Caco-2 (cell line): ENCODE measurements at regions of chr6 and their contacts with region 1.

Region 1: GRCh38 chr6:37137201-37138090 is 32.5 kb upstream of the PIM1 start:
- DNase-seq: peak; percentile 88 to 90
- H3K4me3 ChIP-seq: peak overlapping the region; percentile 47
- H3K4me3 Mint-ChIP-seq: peak overlapping the region; percentile 96
- H3K27ac Mint-ChIP-seq: peak overlapping the region; percentile 100
- H3K4me1 ChIP-seq: peaks cover 62% of the 10 kb centered on the region
- H3K4me1 Mint-ChIP-seq: peaks cover 52% of the 10 kb centered on the region
- H3K27me3 ChIP-seq: no peaks in the 10 kb centered on the region
- H3K27me3 Mint-ChIP-seq: no peaks in the 10 kb centered on the region
- CTCF ChIP-seq: no peak

Region 2: DNA sequence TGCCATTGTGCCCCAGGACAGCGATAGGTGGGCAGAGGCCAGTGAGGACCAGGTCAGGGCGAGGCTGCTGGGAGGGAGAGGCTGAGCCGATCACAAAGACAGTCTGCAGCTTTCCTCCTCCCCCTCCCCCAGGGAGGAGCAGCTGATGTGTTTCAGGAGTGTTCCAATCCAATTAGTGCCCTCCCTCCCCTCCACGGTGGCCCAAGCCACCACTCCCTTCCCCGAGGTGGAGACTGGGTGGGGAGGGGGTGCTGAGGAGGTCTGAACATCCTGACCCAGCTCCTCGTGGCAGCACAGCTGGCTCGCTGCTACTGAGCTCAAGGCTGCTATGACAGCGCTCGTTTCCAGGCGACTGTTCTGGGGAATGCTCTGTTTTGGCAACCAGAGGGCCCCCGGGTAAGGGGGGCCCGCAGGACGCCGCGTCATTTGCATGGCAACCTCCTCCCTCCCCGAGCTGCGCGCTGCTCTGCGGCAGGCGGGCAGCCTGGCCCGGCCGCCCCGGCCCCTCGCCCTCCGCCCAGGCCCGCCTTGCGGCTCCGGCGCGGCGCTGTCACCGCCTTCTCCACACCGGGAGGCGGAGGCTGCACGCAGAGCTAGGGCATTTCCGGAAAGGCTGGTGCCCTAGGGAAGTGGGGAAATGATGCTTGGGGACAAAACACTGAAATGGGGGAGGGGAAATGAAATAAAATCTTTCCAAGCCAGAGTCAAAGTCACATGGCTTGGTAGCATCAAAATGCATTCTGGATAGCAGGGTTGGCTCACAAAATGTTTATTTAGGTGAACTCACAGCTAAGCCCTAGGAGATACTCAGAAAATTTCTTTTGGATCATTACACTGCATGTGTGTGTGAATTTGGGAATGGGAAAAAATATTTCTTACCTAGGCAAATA is 34.9 kb before region 1 on chr6:
- CTCF ChIA-PET with region 1: interaction called, 3 read pairs
- POLR2A ChIA-PET with region 1: interaction called, 9 read pairs
- intact Hi-C with region 1: loop called (anchors 1 kb)
- DNase-seq: peak; percentile 84 to 88
- H3K4me3 ChIP-seq: peak overlapping the region; percentile 16
- H3K4me3 Mint-ChIP-seq: peak overlapping the region; percentile 82
- H3K27ac Mint-ChIP-seq: peak overlapping the region; percentile 92
- H3K4me1 ChIP-seq: peaks cover 53% of the 10 kb centered on the region
- H3K4me1 Mint-ChIP-seq: peaks cover 26% of the 10 kb centered on the region
- H3K27me3 ChIP-seq: no peaks in the 10 kb centered on the region
- H3K27me3 Mint-ChIP-seq: no peaks in the 10 kb centered on the region
- CTCF ChIP-seq: no peak